Psoas muscle (tissue), 8 donors: ENCODE measurements at regions of chr7 and their contacts with region 1.

Region 1: GRCh38 chr7:124369310-124369709 is 336.4 kb upstream of the TMEM229A start:
- DNase-seq: no peak
- ATAC-seq: no peak
- H3K4me3 ChIP-seq: no peak overlapping the region
- H3K27ac ChIP-seq: no peak overlapping the region
- H3K4me1 ChIP-seq: no peaks in the 10 kb centered on the region
- H3K27me3 ChIP-seq: no peaks in the 10 kb centered on the region
- CTCF ChIP-seq: no peak

Region 2: DNA sequence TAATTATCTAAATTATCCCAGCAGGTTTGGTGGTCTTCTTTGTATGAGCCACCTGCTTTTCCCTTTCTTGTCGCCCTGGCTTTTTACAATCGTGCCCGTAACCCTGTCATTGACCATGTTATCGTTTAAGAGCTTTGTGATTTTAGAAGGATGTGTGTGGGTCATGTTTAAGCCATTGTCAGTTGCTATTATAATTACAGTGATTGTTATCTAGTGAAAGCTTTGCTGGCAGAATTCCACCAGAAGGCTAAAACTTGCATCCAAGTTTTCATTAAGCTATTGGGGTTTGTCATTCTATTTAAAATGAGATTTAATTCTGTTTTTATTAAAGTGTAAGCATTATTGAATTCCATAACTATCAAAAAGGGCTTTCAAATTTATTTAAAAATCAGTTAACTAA is 17.7 kb after region 1 on chr7:
- intact Hi-C with region 1: loop called in 1 of 2 experiments (anchors 1 kb)
- DNase-seq: no peak
- ATAC-seq: no peak
- H3K4me3 ChIP-seq: no peak overlapping the region
- H3K27ac ChIP-seq: no peak overlapping the region
- H3K4me1 ChIP-seq: no peaks in the 10 kb centered on the region
- H3K27me3 ChIP-seq: no peaks in the 10 kb centered on the region
- CTCF ChIP-seq: no peak

Region 3: GRCh38 chr7:124550036-124550435 is 180.7 kb after region 1 on chr7:
- intact Hi-C with region 1: no loop called
- DNase-seq: no peak
- ATAC-seq: no peak
- H3K4me3 ChIP-seq: no peak overlapping the region
- H3K27ac ChIP-seq: no peak overlapping the region
- H3K4me1 ChIP-seq: no peaks in the 10 kb centered on the region
- H3K27me3 ChIP-seq: no peaks in the 10 kb centered on the region
- CTCF ChIP-seq: no peak